Activated naive CD4-positive, alpha-beta T cell treated with anti-CD3 and anti-CD28 coated beads, Interleukin-2, amount 10 ng/mL, durations not matched to agents 7 days and 5 days (primary cell): ENCODE measurements at regions of chr4 and their contacts with region 1.

Region 1: DNA sequence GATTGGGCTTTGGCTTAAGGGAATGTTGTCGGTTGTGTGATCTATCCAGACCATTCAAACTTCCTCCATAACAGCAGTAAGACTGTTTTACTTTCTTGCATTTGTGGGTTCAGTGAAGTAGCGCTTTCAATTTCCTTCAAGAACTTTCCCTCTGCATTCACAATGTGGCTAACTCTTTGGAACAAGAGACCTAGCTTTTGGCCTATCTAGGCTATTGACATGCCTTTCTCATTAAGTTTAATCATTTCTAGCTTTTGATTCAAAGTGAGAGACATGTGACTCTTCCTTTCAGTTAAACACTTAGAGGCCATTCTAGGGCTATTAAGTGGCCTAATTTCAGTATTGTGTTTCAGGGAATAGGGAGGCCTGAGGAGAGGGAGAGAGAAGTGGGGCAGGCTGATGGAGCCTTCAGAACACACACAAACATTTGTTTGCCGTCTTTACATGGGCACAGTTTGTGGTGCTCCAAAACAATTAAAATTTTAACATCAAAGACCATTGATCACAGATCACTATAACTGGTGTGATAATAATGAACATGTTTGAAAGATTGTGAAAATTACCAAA is 34.1 kb downstream of the ADH5 start:
- DNase-seq: no peak
- H3K4me3 Mint-ChIP-seq: no peak overlapping the region
- H3K27ac Mint-ChIP-seq: peak overlapping the region; percentile 53
- H3K4me1 Mint-ChIP-seq: peaks cover 37% of the 10 kb centered on the region
- H3K27me3 Mint-ChIP-seq: no peaks in the 10 kb centered on the region

Region 2: GRCh38 chr4:99043346-99043745 is 11.2 kb before region 1 on chr4:
- CTCF ChIA-PET with region 1: interaction called, 12 read pairs
- DNase-seq: no peak
- H3K4me3 Mint-ChIP-seq: no peak overlapping the region
- H3K27ac Mint-ChIP-seq: peak overlapping the region; percentile 82
- H3K4me1 Mint-ChIP-seq: peaks cover 18% of the 10 kb centered on the region
- H3K27me3 Mint-ChIP-seq: no peaks in the 10 kb centered on the region

Region 3: DNA sequence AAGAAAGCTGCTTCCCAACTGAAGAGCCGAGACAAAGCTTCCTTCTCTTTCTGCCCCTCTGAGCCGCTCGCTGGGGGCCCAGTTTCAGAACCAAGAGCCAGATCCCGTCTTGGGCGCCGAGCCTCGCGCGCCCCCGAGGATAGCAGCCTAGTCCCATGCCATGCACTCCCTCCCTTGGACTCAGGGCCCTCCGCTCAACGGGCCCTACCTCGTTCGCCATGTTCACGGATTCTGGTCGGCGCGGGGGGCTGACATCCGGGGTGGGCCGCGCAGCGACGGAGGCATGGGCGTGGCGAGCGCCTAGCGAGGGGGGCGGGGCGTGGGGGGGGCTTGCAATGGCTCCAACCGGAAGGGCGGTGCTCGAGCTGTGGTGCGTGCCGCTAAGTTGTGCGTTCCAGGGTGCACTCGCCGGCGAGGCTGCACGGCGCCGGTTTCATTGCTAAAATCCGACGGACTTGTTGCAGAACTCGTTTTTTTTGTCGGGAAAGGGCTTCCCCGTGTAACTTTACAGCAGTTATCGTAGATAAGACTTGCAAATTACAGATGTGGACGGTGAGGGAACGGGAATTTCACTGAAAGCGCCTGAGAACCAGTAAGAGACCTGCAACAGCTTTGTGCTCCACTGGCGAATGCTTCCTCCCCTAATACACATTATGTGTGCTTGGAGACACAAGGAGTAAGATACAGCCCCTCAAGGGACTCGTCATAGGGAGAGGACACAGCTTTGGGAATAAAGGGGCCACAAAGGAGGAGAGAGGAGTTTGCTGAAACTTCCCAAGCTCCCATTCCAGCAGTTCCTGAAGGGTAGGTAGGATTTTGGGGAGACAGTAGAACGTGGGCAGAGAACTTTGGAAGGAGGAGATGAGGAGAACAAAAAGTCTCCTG is 34.2 kb after region 1 on chr4 and contains the start of gene ADH5:
- CTCF ChIA-PET with region 1: interaction called, 10 read pairs
- DNase-seq: peak; percentile 94
- H3K4me3 Mint-ChIP-seq: peak within 1 kb of the TSS; percentile 92
- H3K27ac Mint-ChIP-seq: peak within 1 kb of the TSS; percentile 96
- H3K4me1 Mint-ChIP-seq: peaks cover 43% of the 10 kb centered on the region
- H3K27me3 Mint-ChIP-seq: no peaks in the 10 kb centered on the region